Activated B cell treated with CpG ODN at 0.5 μM for 24 hours (primary cell): ENCODE measurements at regions of chr22 and their contacts with region 1.

Region 1: DNA sequence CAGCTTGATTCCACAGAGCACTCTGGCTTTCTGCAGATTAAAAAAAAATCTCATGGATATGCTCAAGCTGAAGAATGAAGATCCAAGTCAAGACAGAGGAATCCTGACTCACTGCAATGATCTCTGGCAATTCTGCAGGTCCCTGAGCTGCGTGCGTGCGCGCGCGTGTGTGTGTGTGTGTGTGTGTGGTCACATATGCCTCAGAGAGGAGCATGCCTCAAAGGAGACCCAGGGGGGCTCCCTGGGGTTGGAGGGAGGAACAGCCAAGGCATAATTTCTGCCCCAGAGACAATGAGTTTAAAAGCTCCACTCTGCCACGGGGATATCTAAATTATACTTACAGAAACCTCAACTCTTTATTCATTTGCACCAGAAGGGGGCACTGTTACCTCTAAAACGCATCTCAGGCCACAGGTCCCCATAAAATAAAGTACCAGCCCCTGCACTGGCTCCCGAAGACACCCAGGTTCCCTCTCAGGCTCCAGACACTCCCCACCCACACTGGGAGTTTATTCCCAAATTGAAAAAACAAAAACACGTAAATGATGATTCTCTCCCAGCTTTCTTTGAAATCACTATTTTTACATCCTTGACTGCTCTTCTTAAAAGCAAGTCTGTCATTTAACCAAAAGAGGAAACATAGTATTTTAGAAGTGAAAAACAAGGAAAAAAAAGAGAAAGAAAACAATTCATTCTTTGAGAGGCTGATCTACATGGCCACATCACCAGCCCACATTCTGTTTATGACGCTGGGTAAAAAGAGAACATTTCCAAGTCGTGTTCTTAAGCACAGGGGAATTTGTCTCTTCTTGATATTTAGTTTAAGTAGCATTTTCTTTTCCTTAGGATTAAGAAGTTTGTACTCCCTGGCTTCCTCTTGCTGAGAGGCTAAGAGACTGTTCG is 401.0 kb downstream of the LARGE1 start:
- DNase-seq: peak; percentile 22
- ATAC-seq: peak; percentile 51
- H3K4me3 Mint-ChIP-seq: peak overlapping the region; percentile 55
- H3K27ac Mint-ChIP-seq: peak overlapping the region; percentile 78
- H3K4me1 Mint-ChIP-seq: peaks cover 55% of the 10 kb centered on the region
- H3K27me3 Mint-ChIP-seq: no peaks in the 10 kb centered on the region
- CTCF ChIP-seq: no peak

Region 2: GRCh38 chr22:33232071-33232470 is 287.3 kb before region 1 on chr22:
- CTCF ChIA-PET with region 1: no interaction called
- POLR2A ChIA-PET with region 1: no interaction called
- intact Hi-C with region 1: no loop called
- DNase-seq: no peak
- ATAC-seq: no peak
- H3K4me3 Mint-ChIP-seq: no peak overlapping the region
- H3K27ac Mint-ChIP-seq: no peak overlapping the region
- H3K4me1 Mint-ChIP-seq: peaks cover 13% of the 10 kb centered on the region
- H3K27me3 Mint-ChIP-seq: no peaks in the 10 kb centered on the region
- CTCF ChIP-seq: no peak

Region 3: GRCh38 chr22:33565580-33565995 is 46.3 kb after region 1 on chr22:
- CTCF ChIA-PET with region 1: interaction called, 9 read pairs
- POLR2A ChIA-PET with region 1: interaction called, 16 read pairs
- intact Hi-C with region 1: loop called (anchors 1 kb)
- DNase-seq: no peak
- ATAC-seq: no peak
- H3K4me3 Mint-ChIP-seq: no peak overlapping the region
- H3K27ac Mint-ChIP-seq: peak overlapping the region; percentile 8
- H3K4me1 Mint-ChIP-seq: peaks cover 81% of the 10 kb centered on the region
- H3K27me3 Mint-ChIP-seq: no peaks in the 10 kb centered on the region
- CTCF ChIP-seq: no peak

Region 4: GRCh38 chr22:33743756-33744155 is 224.4 kb after region 1 on chr22:
- CTCF ChIA-PET with region 1: no interaction called
- POLR2A ChIA-PET with region 1: no interaction called
- intact Hi-C with region 1: loop called (anchors 2 kb)
- DNase-seq: no peak
- ATAC-seq: peak; percentile 65
- H3K4me3 Mint-ChIP-seq: no peak overlapping the region
- H3K27ac Mint-ChIP-seq: no peak overlapping the region
- H3K4me1 Mint-ChIP-seq: peaks cover 53% of the 10 kb centered on the region
- H3K27me3 Mint-ChIP-seq: no peaks in the 10 kb centered on the region
- CTCF ChIP-seq: no peak

Region 5: GRCh38 chr22:34111210-34111824 is 592.0 kb after region 1 on chr22:
- CTCF ChIA-PET with region 1: interaction called, 21 read pairs
- POLR2A ChIA-PET with region 1: interaction called, 5 read pairs
- intact Hi-C with region 1: loop called (anchors 1 kb)
- DNase-seq: peak; percentile 17
- ATAC-seq: peak; percentile 57
- H3K4me3 Mint-ChIP-seq: no peak overlapping the region
- H3K27ac Mint-ChIP-seq: no peak overlapping the region
- H3K4me1 Mint-ChIP-seq: no peaks in the 10 kb centered on the region
- H3K27me3 Mint-ChIP-seq: peaks cover 4% of the 10 kb centered on the region
- CTCF ChIP-seq: no peak

Region 6: DNA sequence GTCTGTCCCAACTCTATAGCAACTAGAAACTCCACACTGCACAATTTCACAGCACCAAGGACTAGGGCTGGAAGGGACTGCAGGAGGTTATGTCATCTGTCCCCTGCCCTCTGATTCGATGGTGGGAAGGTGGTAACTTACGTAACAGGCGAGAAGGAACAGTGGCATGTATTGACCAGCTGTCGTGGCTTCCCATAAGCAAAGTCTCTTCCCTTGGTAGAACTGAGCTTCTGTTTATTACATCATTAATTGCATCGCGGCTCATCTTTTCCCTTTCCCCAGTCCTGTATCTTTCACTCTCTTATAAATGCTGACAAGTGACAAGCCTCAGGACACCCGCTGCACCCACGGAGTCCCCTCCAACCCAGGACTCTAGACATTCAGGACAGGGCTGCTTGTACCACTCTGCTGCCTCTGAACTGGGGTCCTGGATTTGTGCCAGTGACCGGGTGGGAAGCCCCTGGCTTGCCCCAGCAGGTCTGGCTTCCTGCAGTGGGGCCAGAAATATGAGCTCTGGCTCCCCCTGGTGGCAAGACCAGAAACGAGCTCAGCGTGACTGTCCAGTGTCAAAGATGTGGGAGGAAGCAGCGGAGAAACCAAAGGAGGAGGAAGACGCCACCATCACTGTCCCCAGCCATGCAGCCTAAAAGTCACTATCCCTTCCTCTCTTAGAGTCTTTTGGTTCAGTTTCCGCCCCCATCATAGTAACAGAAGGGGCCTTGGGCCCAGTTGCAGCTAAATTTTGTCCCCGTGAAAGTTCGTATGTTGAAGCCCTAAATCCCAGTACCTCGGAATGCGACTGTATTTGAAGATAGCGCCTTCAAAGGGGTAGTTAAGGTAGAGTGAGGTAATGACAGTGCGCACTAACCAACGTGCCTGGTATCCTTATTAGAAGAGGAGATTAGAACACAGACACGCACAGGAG is 1631.1 kb after region 1 on chr22:
- CTCF ChIA-PET with region 1: no interaction called
- POLR2A ChIA-PET with region 1: no interaction called
- intact Hi-C with region 1: loop called (anchors 5 kb)
- DNase-seq: peak; percentile 44
- ATAC-seq: peak; percentile 61
- H3K4me3 Mint-ChIP-seq: no peak overlapping the region
- H3K27ac Mint-ChIP-seq: no peak overlapping the region
- H3K4me1 Mint-ChIP-seq: peaks cover 3% of the 10 kb centered on the region
- H3K27me3 Mint-ChIP-seq: peaks cover 29% of the 10 kb centered on the region
- CTCF ChIP-seq: no peak